Common myeloid progenitor, CD34-positive (primary cell): ENCODE measurements at regions of chr19 and their contacts with region 1.

Region 1: GRCh38 chr19:17266975-17267788 is at the start of gene BABAM1:
- DNase-seq: peak; percentile 99 to 100 (median 100)
- H3K4me3 ChIP-seq: peak within 1 kb of the TSS; percentile 73 to 100 (median 99)
- H3K27ac ChIP-seq: peak within 1 kb of the TSS; percentile 70 to 90
- H3K4me1 ChIP-seq: peaks cover 10 to 32% (median 25%) of the 10 kb centered on the region in 4 experiments
- H3K27me3 ChIP-seq: no peaks in the 10 kb centered on the region

Region 2: GRCh38 chr19:17215125-17215971 is 51.8 kb before region 1 on chr19 and contains the start of gene USE1:
- CTCF ChIA-PET with region 1: interaction called, 11 read pairs
- POLR2A ChIA-PET with region 1: interaction called, 3 read pairs
- DNase-seq: peak; percentile 91 to 95 (median 95)
- H3K4me3 ChIP-seq: peak within 1 kb of the TSS; percentile 69 to 87 (median 80)
- H3K27ac ChIP-seq: peak within 1 kb of the TSS; percentile 66 to 88
- H3K4me1 ChIP-seq: peaks cover 0 to 16% (median 16%) of the 10 kb centered on the region in 4 experiments
- H3K27me3 ChIP-seq: no peaks in the 10 kb centered on the region

Region 3: DNA sequence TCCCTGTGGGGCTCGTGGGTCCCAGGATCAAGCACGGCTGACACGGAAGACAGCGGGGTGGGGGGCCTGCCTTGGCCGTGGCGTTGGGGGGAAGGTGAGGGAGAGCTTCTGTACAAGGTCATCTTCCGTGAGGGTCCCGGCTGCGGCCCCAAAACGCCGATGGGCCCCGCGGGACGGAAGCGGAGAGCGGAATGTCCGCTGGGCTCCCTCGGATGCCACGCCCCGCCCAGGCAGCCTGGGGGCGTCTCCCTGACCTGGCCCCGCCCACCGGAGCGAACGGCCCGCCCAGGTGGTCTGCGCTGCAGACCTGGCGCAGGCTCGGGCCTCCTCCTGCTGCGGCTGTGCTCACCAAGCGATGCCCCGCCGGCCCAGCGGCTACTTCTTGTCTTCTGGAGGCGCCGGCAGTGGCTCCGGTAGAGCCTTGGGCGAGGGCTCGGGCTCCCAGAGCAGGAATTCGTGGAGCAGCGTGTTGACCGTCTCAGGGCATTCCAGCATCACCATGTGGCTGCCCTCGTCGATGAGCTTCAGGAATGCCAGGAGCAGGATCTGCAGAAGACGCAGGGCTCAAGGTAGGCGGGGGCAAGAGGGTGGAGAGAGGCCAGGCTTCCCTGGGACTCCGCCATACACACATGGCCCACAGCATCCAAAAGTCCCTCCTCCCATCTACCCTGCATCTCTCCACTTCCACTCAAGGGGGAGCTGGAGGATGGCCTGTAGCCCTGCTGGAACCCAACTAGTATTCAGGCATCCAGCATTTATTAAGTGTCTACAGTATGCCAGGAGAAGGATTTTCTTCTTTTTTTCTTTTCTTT is 25.3 kb after region 1 on chr19:
- CTCF ChIA-PET with region 1: interaction called, 183 read pairs
- POLR2A ChIA-PET with region 1: no interaction called
- DNase-seq: peak; percentile 77 to 88 (median 86)
- H3K4me3 ChIP-seq: peak overlapping the region; percentile 58 to 86 (median 70)
- H3K27ac ChIP-seq: peak overlapping the region in 1 of 2 experiments; percentile 75
- H3K4me1 ChIP-seq: peaks cover 0 to 16% (median 8%) of the 10 kb centered on the region in 4 experiments
- H3K27me3 ChIP-seq: no peaks in the 10 kb centered on the region

Region 4: DNA sequence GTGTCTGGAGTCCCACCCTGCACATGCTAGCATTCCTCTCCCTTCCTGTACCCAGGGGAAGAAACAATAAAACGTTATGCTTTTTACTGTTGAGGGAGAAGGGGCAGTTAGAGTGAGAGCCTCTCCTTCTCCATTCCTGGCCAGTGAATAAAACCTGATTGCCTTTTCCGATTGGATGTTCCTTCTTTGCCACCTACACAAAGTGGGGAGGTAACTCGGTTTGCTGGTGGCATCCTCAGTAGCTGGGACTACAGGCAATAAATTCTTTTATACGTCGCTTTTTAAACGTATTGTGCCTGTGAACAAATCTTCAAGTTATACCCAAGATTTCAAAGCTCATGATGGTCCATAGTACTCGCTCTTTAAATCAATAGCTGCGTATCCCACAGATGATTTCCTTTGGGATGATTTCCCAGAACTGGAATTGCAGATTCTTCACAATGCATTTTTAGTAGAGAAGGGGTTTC is 152.0 kb after region 1 on chr19:
- CTCF ChIA-PET with region 1: no interaction called
- POLR2A ChIA-PET with region 1: no interaction called
- DNase-seq: peak in 2 of 3 donors; percentile 19 to 39
- H3K4me3 ChIP-seq: peak overlapping the region; percentile 67 to 91 (median 79)
- H3K27ac ChIP-seq: peak overlapping the region in 1 of 2 experiments; percentile 67
- H3K4me1 ChIP-seq: peaks cover 6 to 20% (median 12%) of the 10 kb centered on the region in 4 experiments
- H3K27me3 ChIP-seq: no peaks in the 10 kb centered on the region